OCI-LY7 (cell line): ENCODE measurements at regions of chr17 and their contacts with region 1.

Region 1: DNA sequence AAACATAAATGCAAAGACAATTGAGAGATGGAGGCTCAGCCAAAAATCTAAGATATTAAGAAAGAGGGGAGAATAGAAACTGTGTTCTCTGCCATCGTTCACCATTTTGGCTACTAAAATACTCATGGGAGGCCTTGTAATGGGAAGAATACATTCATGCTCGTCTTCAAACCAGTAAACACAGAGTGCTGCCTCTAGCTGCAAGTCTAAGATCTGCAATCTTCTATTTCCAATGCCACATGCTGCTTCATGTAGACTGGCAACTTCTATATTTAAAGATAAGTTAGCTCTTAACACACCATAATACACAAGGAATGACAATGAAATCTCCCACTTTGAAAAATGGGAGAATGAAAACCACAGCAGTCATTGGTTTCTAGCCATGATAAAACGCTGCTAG is 387.3 kb downstream of the HS3ST3B1 start:
- DNase-seq: peak; percentile 53
- H3K4me3 ChIP-seq: no peak overlapping the region
- H3K27ac ChIP-seq: no peak overlapping the region
- H3K4me1 ChIP-seq: no peaks in the 10 kb centered on the region
- CTCF ChIP-seq: peak; percentile 73

Region 2: GRCh38 chr17:14353861-14354474 is 334.2 kb before region 1 on chr17:
- CTCF ChIA-PET with region 1: interaction called, 10 read pairs
- POLR2A ChIA-PET with region 1: no interaction called
- intact Hi-C with region 1: no loop called
- DNase-seq: no peak
- H3K4me3 ChIP-seq: no peak overlapping the region
- H3K27ac ChIP-seq: no peak overlapping the region
- H3K4me1 ChIP-seq: peaks cover 68% of the 10 kb centered on the region
- CTCF ChIP-seq: no peak

Region 3: GRCh38 chr17:14641117-14641516 is 47.0 kb before region 1 on chr17:
- CTCF ChIA-PET with region 1: no interaction called
- POLR2A ChIA-PET with region 1: no interaction called
- intact Hi-C with region 1: no loop called
- DNase-seq: no peak
- H3K4me3 ChIP-seq: no peak overlapping the region
- H3K27ac ChIP-seq: no peak overlapping the region
- H3K4me1 ChIP-seq: no peaks in the 10 kb centered on the region
- CTCF ChIP-seq: no peak